ENCODE measurements at regions of chr19 and their contacts with region 1.

Region 1: DNA sequence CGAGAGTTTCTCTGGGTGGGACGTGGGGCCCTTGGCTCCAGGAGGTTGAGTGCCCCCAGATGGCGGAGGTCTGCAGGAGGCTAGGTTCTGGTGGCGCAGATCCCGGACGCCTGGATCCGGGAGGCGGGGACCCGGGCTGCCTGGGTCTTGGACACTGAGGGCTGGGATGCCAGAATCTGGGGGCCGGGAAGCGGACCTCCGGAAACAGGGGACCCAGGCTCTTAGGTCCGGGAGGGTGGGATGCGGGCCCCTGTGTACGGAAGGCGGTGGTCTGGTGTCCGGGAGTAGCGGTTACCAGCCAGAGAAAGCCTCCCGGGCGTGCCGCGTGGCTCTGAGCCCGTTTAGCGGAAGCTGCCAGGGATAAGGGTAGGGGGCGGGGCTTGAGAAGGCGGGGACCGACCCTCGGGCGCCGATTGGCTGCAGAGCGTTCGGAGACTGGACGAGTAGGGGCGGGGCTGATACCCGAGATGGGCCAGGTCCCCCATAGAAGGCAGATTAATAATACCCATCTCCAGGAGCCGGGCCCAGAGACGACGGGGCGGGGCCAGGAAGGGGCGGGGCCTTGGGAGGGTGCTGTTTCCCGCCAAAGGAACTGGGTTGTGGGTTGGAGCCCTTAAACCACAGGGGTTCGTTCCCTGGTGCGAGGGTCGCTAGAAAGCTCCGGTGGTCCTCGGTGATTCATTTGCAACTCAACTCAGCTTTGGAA is at the start of gene SLC1A5:
- DNase-seq: peak; percentile 95 to 97 (median 95)
- H3K4me3 ChIP-seq: peak within 1 kb of the TSS; percentile 78 to 90
- H3K4me3 Mint-ChIP-seq: peak within 1 kb of the TSS; percentile 89 to 97 (median 92)
- H3K27ac ChIP-seq: peak within 1 kb of the TSS; percentile 75
- H3K27ac Mint-ChIP-seq: peak within 1 kb of the TSS; percentile 80 to 99 (median 90)
- H3K4me1 ChIP-seq: peaks cover 61% of the 10 kb centered on the region
- H3K4me1 Mint-ChIP-seq: peaks cover 42 to 78% (median 56%) of the 10 kb centered on the region in 4 donors
- H3K27me3 ChIP-seq: no peaks in the 10 kb centered on the region
- H3K27me3 Mint-ChIP-seq: no peaks in the 10 kb centered on the region
- total RNA-seq, gene SLC1A5: 20.3 TPM

Region 2: GRCh38 chr19:46717034-46717723 is 71.2 kb before region 1 on chr19 and contains the start of gene PRKD2:
- CTCF ChIA-PET with region 1: no interaction called
- POLR2A ChIA-PET with region 1: interaction called, 20 read pairs
- intact Hi-C with region 1: loop called (anchors 2 kb)
- DNase-seq: peak; percentile 76 to 85 (median 79)
- H3K4me3 ChIP-seq: peak within 1 kb of the TSS; percentile 82 to 94
- H3K4me3 Mint-ChIP-seq: peak within 1 kb of the TSS; percentile 93 to 98 (median 94)
- H3K27ac ChIP-seq: peak within 1 kb of the TSS; percentile 95
- H3K27ac Mint-ChIP-seq: peak within 1 kb of the TSS; percentile 97 to 99 (median 98)
- H3K4me1 ChIP-seq: peaks cover 44% of the 10 kb centered on the region
- H3K4me1 Mint-ChIP-seq: peaks cover 23 to 64% (median 37%) of the 10 kb centered on the region in 4 donors
- H3K27me3 ChIP-seq: no peaks in the 10 kb centered on the region
- H3K27me3 Mint-ChIP-seq: no peaks in the 10 kb centered on the region
- total RNA-seq, gene PRKD2: 115 to 122 TPM

Region 3: DNA sequence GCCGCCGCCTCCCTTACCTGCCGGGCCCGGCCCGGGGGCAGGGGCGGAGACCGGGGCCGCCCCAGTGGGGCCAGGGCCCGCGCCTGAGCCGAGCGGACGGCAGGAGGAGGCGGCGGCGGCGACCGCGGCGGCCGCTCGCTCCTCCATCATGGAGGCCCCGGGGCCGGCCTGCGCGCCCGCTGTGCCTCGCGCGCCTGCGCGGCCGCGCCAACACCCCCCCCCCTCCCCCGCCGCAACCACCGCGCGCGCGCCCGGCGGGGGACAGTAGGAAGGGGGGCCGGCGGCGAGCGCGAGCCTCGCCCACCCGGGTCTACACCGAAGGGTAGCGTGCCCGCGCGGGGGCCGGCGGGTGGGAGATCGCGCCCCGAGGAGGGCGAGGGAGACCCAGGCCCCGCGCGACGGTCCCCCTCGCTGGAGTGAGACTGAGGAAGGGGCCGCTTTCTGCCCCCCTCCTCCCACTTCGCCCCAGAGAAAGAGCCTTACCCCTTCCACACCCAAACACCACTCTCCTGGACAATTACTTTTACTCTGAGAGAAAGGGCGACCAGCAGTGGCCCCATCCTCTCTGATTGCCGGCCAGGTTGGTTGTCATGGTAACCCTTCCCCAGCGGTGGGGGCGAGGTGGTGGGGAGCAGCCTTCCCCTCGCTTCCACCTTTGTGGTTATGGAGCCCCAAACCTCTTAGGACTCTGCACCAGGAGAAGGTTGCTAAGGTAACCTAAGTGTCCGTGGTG is 42.0 kb before region 1 on chr19 and contains the start of gene STRN4:
- CTCF ChIA-PET with region 1: interaction called, 3 read pairs
- POLR2A ChIA-PET with region 1: interaction called, 4 read pairs
- intact Hi-C with region 1: loop called (anchors 2 kb)
- DNase-seq: peak; percentile 49 to 74 (median 52)
- H3K4me3 ChIP-seq: peak within 1 kb of the TSS; percentile 54 to 80
- H3K4me3 Mint-ChIP-seq: peak within 1 kb of the TSS; percentile 88 to 94 (median 90)
- H3K27ac ChIP-seq: peak within 1 kb of the TSS; percentile 76
- H3K27ac Mint-ChIP-seq: peak within 1 kb of the TSS; percentile 92 to 96 (median 95)
- H3K4me1 ChIP-seq: peaks cover 35% of the 10 kb centered on the region
- H3K4me1 Mint-ChIP-seq: peaks cover 35 to 64% (median 49%) of the 10 kb centered on the region in 4 donors
- H3K27me3 ChIP-seq: no peaks in the 10 kb centered on the region
- H3K27me3 Mint-ChIP-seq: no peaks in the 10 kb centered on the region
- total RNA-seq, gene STRN4: 81.2 to 88.8 TPM

Region 4: GRCh38 chr19:46753420-46754155 is 34.8 kb before region 1 on chr19:
- CTCF ChIA-PET with region 1: interaction called, 15 read pairs
- POLR2A ChIA-PET with region 1: interaction called, 4 read pairs
- intact Hi-C with region 1: loop called (anchors 2 kb)
- DNase-seq: peak; percentile 62 to 80 (median 68)
- H3K4me3 ChIP-seq: no peak overlapping the region
- H3K4me3 Mint-ChIP-seq: no peak overlapping the region
- H3K27ac ChIP-seq: no peak overlapping the region
- H3K27ac Mint-ChIP-seq: peak overlapping the region in 5 of 7 donors; percentile 22 to 73 (median 57)
- H3K4me1 ChIP-seq: no peaks in the 10 kb centered on the region
- H3K4me1 Mint-ChIP-seq: peaks cover 6 to 13% (median 10%) of the 10 kb centered on the region in 4 donors
- H3K27me3 ChIP-seq: no peaks in the 10 kb centered on the region
- H3K27me3 Mint-ChIP-seq: no peaks in the 10 kb centered on the region

Region 5: GRCh38 chr19:46766569-46767317 is 21.7 kb before region 1 on chr19:
- CTCF ChIA-PET with region 1: interaction called, 14 read pairs
- POLR2A ChIA-PET with region 1: interaction called, 10 read pairs
- intact Hi-C with region 1: loop called (anchors 2 kb)
- DNase-seq: peak; percentile 51 to 66 (median 58)
- H3K4me3 ChIP-seq: no peak overlapping the region
- H3K4me3 Mint-ChIP-seq: peak overlapping the region in 1 of 8 donors; percentile 39
- H3K27ac ChIP-seq: no peak overlapping the region
- H3K27ac Mint-ChIP-seq: peak overlapping the region in 1 of 7 donors; percentile 53
- H3K4me1 ChIP-seq: no peaks in the 10 kb centered on the region
- H3K4me1 Mint-ChIP-seq: peaks cover 2 to 6% (median 5%) of the 10 kb centered on the region in 4 donors
- H3K27me3 ChIP-seq: no peaks in the 10 kb centered on the region
- H3K27me3 Mint-ChIP-seq: no peaks in the 10 kb centered on the region

Region 6: DNA sequence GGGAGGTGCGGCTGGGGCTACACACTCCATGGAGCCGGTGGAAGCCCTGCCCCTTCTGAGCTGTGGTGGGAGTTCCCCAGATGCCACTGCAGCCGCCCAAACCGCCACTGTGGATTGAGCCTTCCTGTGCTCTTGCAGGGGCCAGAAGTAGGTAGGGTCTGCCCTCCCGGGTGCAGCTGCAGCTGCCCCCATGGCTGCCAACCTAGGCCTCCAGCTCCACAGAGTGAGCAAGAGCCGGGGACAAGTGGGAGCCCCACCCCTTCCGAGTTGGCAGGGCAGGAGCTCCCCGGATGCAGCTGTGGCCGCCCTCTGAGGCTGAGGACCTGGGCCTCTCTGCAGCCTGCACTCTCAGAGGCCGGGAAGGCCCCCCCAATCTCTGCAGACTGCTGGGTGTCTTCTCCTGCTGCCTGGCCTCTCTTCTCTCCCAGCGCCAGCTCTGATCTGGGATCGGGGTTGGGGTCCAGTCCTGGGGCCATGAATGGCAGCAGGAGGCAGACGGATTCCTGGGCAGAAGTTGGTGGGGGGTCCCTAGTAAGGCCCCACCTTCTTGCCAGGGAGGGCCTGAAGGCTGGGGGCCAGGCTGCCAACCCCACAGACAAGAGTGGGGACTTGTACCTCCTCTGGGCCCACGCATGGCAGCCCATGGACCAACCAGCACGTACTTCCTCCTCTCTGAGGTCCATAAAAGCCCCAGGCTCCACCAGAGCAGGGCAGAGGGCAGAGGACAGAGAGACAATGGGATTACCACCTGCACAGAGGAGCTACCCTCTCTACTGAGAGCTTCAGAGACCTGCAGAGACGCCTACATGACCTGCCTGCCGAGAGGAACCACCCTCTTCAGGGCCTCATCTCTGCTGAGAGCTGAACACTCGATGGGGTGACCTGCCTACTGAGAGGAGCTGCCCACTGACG is 33.3 kb after region 1 on chr19:
- CTCF ChIA-PET with region 1: interaction called, 4 read pairs
- POLR2A ChIA-PET with region 1: interaction called, 50 read pairs
- intact Hi-C with region 1: loop called (anchors 2 kb)
- DNase-seq: peak; percentile 48 to 75 (median 52)
- H3K4me3 ChIP-seq: no peak overlapping the region
- H3K4me3 Mint-ChIP-seq: peak overlapping the region in 6 of 8 donors; percentile 20 to 72 (median 56)
- H3K27ac ChIP-seq: peak overlapping the region; percentile 34
- H3K27ac Mint-ChIP-seq: peak overlapping the region; percentile 73 to 95 (median 92)
- H3K4me1 ChIP-seq: peaks cover 29% of the 10 kb centered on the region
- H3K4me1 Mint-ChIP-seq: peaks cover 15 to 43% (median 31%) of the 10 kb centered on the region in 4 donors
- H3K27me3 ChIP-seq: no peaks in the 10 kb centered on the region
- H3K27me3 Mint-ChIP-seq: no peaks in the 10 kb centered on the region

Region 7: DNA sequence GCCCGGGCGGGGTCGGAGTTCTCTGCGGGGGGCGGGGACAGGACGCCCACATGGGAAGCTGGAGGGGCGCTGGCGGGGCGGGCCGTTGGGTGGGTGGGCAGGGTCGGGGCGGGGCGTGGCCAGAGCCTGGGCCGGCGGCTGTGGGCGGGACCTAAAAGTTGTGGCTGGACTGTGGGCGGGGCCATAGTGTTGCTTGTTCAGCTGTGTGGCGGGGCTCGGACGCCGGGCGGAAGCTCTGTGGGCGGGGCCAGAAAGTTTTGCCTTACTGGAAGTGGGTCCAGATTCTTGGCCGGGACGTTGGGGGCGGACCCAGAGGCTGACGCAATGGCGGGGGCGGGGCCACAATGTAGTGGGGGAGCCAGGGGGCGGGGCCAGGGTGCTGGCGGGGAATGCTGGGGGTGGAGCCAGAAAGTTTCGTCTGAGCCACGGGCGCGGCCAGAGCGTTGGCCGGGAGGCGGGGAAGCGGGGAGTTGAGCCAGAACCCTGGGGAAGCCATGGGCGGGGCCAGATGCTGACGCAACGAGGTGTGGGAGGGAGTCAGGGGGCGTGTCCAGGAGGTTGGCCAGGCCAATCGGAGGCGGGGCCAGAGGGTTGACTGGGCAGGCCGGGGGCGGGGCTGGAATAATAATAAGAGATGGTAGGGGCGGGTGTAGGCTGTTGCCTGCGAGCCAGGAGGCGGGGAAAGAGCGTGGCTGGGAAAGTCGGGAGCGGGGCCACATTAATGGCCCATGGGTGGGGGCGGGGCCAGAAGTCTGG is 468.5 kb after region 1 on chr19:
- CTCF ChIA-PET with region 1: no interaction called
- POLR2A ChIA-PET with region 1: no interaction called
- intact Hi-C with region 1: loop called (anchors 10 kb)
- DNase-seq: peak; percentile 97 to 99 (median 98)
- H3K4me3 ChIP-seq: peak overlapping the region; percentile 61 to 62
- H3K4me3 Mint-ChIP-seq: peak overlapping the region; percentile 88 to 98 (median 94)
- H3K27ac ChIP-seq: peak overlapping the region; percentile 76
- H3K27ac Mint-ChIP-seq: peak overlapping the region; percentile 94 to 99 (median 99)
- H3K4me1 ChIP-seq: peaks cover 18% of the 10 kb centered on the region
- H3K4me1 Mint-ChIP-seq: peaks cover 20 to 44% (median 31%) of the 10 kb centered on the region in 4 donors
- H3K27me3 ChIP-seq: no peaks in the 10 kb centered on the region
- H3K27me3 Mint-ChIP-seq: no peaks in the 10 kb centered on the region

Measured in CD4-positive, alpha-beta memory T cell (primary cell).